Panc1 (cell line): ENCODE measurements at regions of chr14 and their contacts with region 1.

Region 1: GRCh38 chr14:29536886-29537511 is 390.6 kb downstream of the PRKD1 start:
- DNase-seq: no peak
- ATAC-seq: no peak
- H3K4me3 ChIP-seq: no peak overlapping the region
- H3K27ac ChIP-seq: no peak overlapping the region
- H3K4me1 ChIP-seq: no peaks in the 10 kb centered on the region
- H3K27me3 ChIP-seq: no peaks in the 10 kb centered on the region; the same call in 1 of the 2 replicates
- CTCF ChIP-seq: peak; percentile 49; the same call in 1 of the 2 replicates

Region 2: GRCh38 chr14:28751467-28752058 is 785.4 kb before region 1 on chr14:
- CTCF ChIA-PET with region 1: interaction called, 5 read pairs
- POLR2A ChIA-PET with region 1: no interaction called
- in situ Hi-C with region 1: loop called (anchors 25 kb)
- intact Hi-C with region 1: loop called (anchors 2 kb)
- DNase-seq: peak; percentile 43
- ATAC-seq: peak; percentile 86
- H3K4me3 ChIP-seq: no peak overlapping the region
- H3K27ac ChIP-seq: no peak overlapping the region
- H3K4me1 ChIP-seq: no peaks in the 10 kb centered on the region
- H3K27me3 ChIP-seq: peaks cover 5% of the 10 kb centered on the region
- CTCF ChIP-seq: peak; percentile 80